ENCODE measurements at regions of chr17 and their contacts with region 1.

Region 1: DNA sequence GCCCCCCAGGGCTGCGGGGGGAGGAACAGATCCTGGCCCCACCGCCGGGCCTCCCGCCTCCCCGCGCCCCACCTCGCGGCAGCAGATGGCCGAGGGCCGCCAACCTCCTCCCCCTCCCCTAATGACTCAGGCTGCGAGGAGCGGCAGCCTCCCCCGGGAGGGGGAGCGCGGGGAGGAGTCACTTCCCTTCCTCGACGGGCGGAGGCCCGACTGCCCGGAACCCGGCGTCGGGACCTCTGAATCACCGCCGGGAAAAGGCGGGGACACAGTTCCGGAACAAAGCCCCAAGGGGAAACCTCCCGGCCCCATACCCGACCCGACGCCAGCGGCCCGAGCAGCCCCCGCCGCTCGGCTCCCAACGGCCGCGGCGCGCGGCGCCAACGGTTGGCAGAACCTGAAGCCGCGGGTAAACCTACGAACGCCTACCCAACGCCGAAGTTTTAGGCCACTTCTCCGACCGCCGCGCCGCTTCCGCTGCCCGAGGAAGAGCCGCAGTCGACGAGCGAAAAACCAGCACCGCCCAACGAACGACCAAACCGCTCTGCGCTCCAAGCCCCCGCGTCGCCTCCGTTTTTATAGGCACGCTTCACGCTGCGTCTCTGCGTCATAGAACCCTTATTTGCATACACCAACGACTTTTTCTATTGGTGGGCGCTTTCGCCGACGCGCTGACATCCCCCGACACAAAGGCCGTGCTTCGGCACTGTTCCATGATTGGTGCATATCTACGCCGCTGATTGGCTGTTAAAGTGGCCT is 5.2 kb upstream of the UNK start:
- DNase-seq: peak; percentile 100
- H3K4me3 ChIP-seq: peak overlapping the region; percentile 61 to 87 (median 72)
- H3K27ac ChIP-seq: peak overlapping the region; percentile 93
- H3K4me1 ChIP-seq: peaks cover 24% of the 10 kb centered on the region
- H3K27me3 ChIP-seq: no peaks in the 10 kb centered on the region
- CTCF ChIP-seq: no peak
- POLR2A ChIP-seq: peak; percentile 100

Region 2: GRCh38 chr17:74972107-74972972 is 807.1 kb before region 1 on chr17 and contains the start of gene HID1:
- CTCF ChIA-PET with region 1: no interaction called
- POLR2A ChIA-PET with region 1: no interaction called
- dilution Hi-C with region 1: no loop called
- intact Hi-C with region 1: no loop called
- DNase-seq: peak; percentile 39
- H3K4me3 ChIP-seq: peak within 1 kb of the TSS; percentile 51 to 89 (median 74)
- H3K27ac ChIP-seq: no peak within 1 kb of the TSS
- H3K4me1 ChIP-seq: peaks cover 17% of the 10 kb centered on the region
- H3K27me3 ChIP-seq: peaks cover 5% of the 10 kb centered on the region in 2 experiments
- CTCF ChIP-seq: no peak
- POLR2A ChIP-seq: no peak
- total RNA-seq, gene HID1: 36.8 and 41.4 TPM in 2 replicates

Region 3: DNA sequence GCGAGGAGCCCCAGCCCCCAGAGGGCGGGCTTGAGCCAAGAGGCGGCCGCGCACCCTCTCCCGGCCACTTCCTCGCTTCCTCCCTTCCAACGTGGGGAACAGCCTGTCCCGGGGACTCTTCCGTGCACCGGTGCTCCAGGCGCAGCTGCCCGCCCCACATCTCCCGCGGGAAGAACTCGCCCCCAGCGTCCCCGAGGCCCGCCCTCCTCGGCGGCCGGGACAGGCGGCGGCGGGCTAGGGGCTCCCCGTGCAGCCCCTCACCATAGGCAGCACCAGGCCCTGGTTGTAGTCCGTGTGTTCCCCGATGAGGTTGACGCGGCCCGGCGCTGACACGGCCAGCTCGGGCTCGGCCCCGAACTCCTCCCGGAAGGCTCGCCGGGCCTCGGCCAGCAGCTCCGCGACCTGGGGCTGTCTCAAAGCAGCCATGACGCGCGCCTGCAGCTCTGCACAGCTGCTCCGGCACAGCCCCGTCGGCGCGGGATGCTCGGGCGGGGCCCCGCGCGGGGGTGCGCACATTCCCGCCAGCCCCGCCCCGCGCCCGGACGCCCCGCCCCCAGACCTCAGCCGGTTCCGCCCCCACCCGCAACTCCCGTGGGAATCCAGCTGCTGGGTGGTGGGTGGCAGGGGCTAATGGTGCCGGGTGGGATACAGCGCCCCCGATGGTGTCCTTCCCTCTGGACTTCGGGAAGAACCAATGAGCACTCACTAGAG is 14.5 kb before region 1 on chr17 and contains the start of gene GALK1:
- CTCF ChIA-PET with region 1: interaction called, 16 read pairs
- POLR2A ChIA-PET with region 1: interaction called, 24 read pairs
- dilution Hi-C with region 1: no loop called
- intact Hi-C with region 1: no loop called
- DNase-seq: peak; percentile 66
- H3K4me3 ChIP-seq: peak within 1 kb of the TSS; percentile 44 to 62 (median 53)
- H3K27ac ChIP-seq: peak within 1 kb of the TSS; percentile 15
- H3K4me1 ChIP-seq: peaks cover 11% of the 10 kb centered on the region
- H3K27me3 ChIP-seq: no peaks in the 10 kb centered on the region
- CTCF ChIP-seq: peak in 1 of 2 donors; percentile 71
- POLR2A ChIP-seq: peak; percentile 34
- total RNA-seq, gene GALK1: 45.8 and 47.0 TPM in 2 replicates

Region 4: DNA sequence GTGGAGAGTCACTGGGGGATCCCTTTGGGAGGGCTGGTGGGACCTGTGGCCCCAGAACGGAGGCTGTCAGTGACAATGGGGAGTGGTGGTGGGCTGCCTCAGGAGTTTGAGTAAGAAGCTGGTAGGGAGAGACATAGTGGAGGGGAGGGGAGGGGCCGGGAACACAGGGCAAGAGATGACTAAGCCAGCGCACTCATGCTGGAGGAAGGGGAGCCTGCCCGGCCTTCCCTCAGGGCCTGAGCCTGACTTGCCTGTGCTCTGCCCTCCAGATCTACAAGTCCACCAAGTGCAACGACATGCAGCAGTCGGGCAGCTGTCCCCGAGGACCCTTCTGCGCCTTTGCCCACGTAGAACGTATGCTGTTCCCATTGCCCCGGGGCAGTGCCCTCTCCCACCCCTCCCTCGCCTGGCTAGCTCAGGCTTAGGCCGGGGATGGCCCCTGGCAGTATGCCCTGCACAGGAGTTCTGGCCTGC is 35.5 kb after region 1 on chr17:
- CTCF ChIA-PET with region 1: interaction called, 13 read pairs
- POLR2A ChIA-PET with region 1: interaction called, 13 read pairs
- dilution Hi-C with region 1: no loop called
- intact Hi-C with region 1: no loop called
- DNase-seq: peak; percentile 59
- H3K4me3 ChIP-seq: no peak overlapping the region
- H3K27ac ChIP-seq: peak overlapping the region; percentile 22
- H3K4me1 ChIP-seq: peaks cover 6% of the 10 kb centered on the region
- H3K27me3 ChIP-seq: no peaks in the 10 kb centered on the region
- CTCF ChIP-seq: no peak
- POLR2A ChIP-seq: no peak

Region 5: DNA sequence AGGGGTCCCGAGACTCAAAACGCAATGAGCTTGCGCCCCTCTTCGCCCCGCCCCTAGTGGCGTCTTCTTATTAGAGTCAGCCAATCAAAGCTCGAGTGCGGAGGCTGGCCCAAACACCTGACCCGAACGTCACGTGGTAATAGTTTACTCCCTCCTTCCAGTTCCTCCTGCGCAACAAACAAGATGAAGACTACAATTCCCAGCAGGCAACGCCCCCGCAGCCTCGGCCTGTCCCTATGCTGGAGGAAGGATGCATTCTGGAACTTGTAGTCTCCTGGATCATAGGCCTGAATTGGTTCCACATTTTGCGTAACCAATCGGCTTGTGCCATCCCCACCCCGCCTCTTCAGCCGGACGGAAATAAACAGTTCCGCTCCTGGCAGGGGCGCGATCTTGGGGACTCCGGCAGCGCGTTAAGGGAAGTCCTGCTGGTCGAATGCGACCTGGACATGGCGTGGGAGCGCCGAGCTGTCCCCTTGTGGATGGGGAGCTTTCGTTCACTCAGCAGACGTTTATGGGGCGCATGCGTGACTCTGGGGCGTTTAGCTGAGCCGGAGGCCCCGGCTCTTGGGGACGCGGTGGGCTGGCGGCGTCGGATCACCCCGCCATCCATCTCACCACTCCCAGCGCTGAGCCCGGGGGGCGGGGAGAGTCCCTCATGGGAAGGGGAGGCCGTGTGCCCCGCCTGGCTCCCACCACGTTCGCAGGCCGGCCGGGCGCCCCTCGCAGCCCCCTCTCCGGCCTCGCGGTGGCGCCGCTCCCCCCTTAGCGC is 76.1 kb after region 1 on chr17 and contains the start of gene WBP2:
- CTCF ChIA-PET with region 1: interaction called, 11 read pairs
- POLR2A ChIA-PET with region 1: interaction called, 23 read pairs
- dilution Hi-C with region 1: no loop called
- intact Hi-C with region 1: loop called (anchors 2 kb)
- DNase-seq: peak; percentile 100
- H3K4me3 ChIP-seq: peak within 1 kb of the TSS; percentile 19 to 76 (median 75)
- H3K27ac ChIP-seq: peak within 1 kb of the TSS; percentile 89
- H3K4me1 ChIP-seq: peaks cover 39% of the 10 kb centered on the region
- H3K27me3 ChIP-seq: no peaks in the 10 kb centered on the region
- CTCF ChIP-seq: peak; percentile 42 to 54
- POLR2A ChIP-seq: peak; percentile 81
- total RNA-seq, gene WBP2: 120 and 126 TPM in 2 replicates

Region 6: GRCh38 chr17:75877752-75878173 is 98.4 kb after region 1 on chr17:
- CTCF ChIA-PET with region 1: interaction called, 4 read pairs
- POLR2A ChIA-PET with region 1: interaction called, 7 read pairs
- dilution Hi-C with region 1: no loop called
- intact Hi-C with region 1: loop called (anchors 1 kb)
- DNase-seq: peak; percentile 74
- H3K4me3 ChIP-seq: peak overlapping the region; percentile 1 to 67 (median 66)
- H3K27ac ChIP-seq: peak overlapping the region; percentile 70
- H3K4me1 ChIP-seq: peaks cover 34% of the 10 kb centered on the region
- H3K27me3 ChIP-seq: no peaks in the 10 kb centered on the region
- CTCF ChIP-seq: peak; percentile 33 to 66
- POLR2A ChIP-seq: no peak

Region 7: GRCh38 chr17:76005263-76006149 is 226.1 kb after region 1 on chr17:
- CTCF ChIA-PET with region 1: no interaction called
- POLR2A ChIA-PET with region 1: interaction called, 3 read pairs
- dilution Hi-C with region 1: no loop called
- intact Hi-C with region 1: loop called (anchors 10 kb)
- DNase-seq: peak; percentile 64
- H3K4me3 ChIP-seq: no peak overlapping the region
- H3K27ac ChIP-seq: no peak overlapping the region
- H3K4me1 ChIP-seq: no peaks in the 10 kb centered on the region
- H3K27me3 ChIP-seq: no peaks in the 10 kb centered on the region
- CTCF ChIP-seq: peak; percentile 59 to 65
- POLR2A ChIP-seq: no peak